Naive thymus-derived CD4-positive, alpha-beta T cell (primary cell): ENCODE measurements at regions of chr22 and their contacts with region 1.

Region 1: DNA sequence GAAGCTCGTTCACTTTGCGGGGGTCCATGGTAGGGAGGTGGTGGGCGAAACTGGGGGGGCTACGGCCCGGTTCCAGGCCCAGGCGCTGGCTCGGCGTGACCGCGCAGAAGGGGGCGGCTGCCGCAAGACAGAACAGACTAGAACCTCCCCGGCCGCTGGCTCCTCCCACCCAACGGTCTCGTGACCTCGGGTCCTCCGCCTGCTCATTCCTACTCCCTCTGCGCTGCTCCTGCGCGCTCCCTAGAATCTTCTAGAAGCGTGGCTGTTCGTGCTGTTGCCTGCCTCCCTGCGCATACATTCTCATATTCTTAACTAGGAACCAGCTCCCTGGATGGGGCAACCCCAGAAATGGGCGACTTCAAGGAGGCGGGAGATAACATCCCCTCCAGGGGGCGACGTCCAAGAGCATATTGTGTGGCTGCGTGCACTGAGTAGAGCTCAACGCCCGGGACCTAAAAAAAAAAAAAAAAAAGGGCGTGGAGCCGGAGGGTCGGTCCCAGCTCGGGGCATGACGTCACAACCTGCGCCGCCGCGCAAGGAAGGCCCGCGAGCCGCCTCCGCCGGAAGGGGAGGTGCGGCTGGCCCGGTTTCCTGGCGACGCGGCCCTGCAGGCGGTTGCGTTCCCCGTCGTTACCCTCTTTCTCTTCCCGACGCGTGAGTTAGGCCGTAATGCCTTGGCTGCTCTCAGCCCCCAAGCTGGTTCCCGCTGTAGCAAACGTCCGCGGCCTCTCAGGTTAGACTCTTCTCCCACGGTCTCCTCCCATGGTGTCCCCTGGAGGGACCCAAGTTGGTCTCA is at the starts of genes ST13 and XPNPEP3:
- DNase-seq: peak; percentile 96 to 98 (median 97)
- ATAC-seq: peak; percentile 94
- H3K4me3 ChIP-seq: peak within 1 kb of the TSS; percentile 83
- H3K4me3 Mint-ChIP-seq: peak within 1 kb of the TSS; percentile 94 to 100 (median 98)
- H3K27ac ChIP-seq: peak within 1 kb of the TSS; percentile 97
- H3K27ac Mint-ChIP-seq: peak within 1 kb of the TSS; percentile 98 to 100 (median 100)
- H3K4me1 ChIP-seq: peaks cover 24 to 39% of the 10 kb centered on the region in 2 donors
- H3K4me1 Mint-ChIP-seq: peaks cover 25 to 72% (median 64%) of the 10 kb centered on the region in 7 donors
- H3K27me3 ChIP-seq: no peaks in the 10 kb centered on the region
- H3K27me3 Mint-ChIP-seq: peaks cover 0 to 2% (median 0%) of the 10 kb centered on the region in 5 donors
- total RNA-seq, gene ST13: 126 to 247 (median 185) TPM
- total RNA-seq, gene XPNPEP3: 14.4 to 21.8 (median 19.0) TPM

Region 2: DNA sequence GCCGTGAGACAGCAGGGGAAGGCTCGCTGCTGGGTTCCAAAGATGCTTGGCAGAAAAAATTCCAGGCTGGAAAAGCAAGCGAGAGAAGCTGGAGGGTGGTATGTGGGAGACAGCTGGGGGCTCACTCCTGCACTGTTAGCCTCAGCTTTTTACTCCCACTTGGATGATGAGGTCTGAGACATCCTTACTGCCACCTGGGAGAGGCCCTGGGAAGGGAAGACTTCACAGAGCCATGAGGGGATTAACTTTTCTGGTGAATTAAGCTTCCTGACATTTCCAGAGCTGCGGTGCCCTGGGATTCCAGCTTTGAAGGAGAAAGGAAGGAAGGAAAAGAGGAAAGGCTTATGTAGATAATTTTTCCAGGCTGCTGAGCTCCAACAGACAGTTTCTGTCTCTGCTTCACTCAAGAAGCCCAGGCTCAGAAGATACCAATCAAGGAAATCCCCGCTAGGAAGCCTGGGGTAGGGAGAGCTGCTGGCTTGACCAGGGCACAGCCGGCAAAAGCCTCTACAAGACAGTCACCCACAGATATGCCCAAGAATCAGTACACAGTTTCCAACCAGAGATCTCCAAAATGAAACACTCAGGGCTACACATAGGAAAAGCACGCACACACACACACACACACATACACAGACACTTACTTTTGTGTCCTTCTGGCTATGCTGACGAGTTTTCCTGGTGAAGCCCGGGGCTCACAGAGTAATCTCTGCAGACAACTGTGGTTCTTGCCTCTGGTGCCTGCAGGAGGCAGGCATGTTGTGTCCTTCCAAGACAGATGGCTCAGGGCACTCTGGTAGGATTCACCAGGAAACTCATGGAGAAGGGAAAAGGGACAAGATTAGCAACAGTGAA is 176.5 kb before region 1 on chr22:
- CTCF ChIA-PET with region 1: interaction called, 3 read pairs
- POLR2A ChIA-PET with region 1: interaction called, 4 read pairs
- intact Hi-C with region 1: loop called (anchors 1 kb)
- DNase-seq: no peak
- ATAC-seq: no peak
- H3K4me3 ChIP-seq: no peak overlapping the region
- H3K4me3 Mint-ChIP-seq: no peak overlapping the region
- H3K27ac ChIP-seq: no peak overlapping the region
- H3K27ac Mint-ChIP-seq: peak overlapping the region in 1 of 9 donors; percentile 34
- H3K4me1 ChIP-seq: no peaks in the 10 kb centered on the region
- H3K4me1 Mint-ChIP-seq: peaks cover 4 to 31% (median 9%) of the 10 kb centered on the region in 7 donors
- H3K27me3 ChIP-seq: no peaks in the 10 kb centered on the region
- H3K27me3 Mint-ChIP-seq: peaks cover 0 to 16% (median 15%) of the 10 kb centered on the region in 5 donors

Region 3: GRCh38 chr22:40898850-40899357 is 42.2 kb after region 1 on chr22:
- CTCF ChIA-PET with region 1: interaction called, 4 read pairs
- POLR2A ChIA-PET with region 1: interaction called, 3 read pairs
- intact Hi-C with region 1: loop called (anchors 2 kb)
- DNase-seq: peak in 7 of 9 donors; percentile 12 to 52 (median 37)
- ATAC-seq: peak; percentile 67
- H3K4me3 ChIP-seq: no peak overlapping the region
- H3K4me3 Mint-ChIP-seq: peak overlapping the region in 1 of 10 donors; percentile 28
- H3K27ac ChIP-seq: no peak overlapping the region
- H3K27ac Mint-ChIP-seq: peak overlapping the region in 2 of 9 donors; percentile 36 to 44
- H3K4me1 ChIP-seq: no peaks in the 10 kb centered on the region
- H3K4me1 Mint-ChIP-seq: peaks cover 4 to 9% (median 5%) of the 10 kb centered on the region in 7 donors
- H3K27me3 ChIP-seq: no peaks in the 10 kb centered on the region
- H3K27me3 Mint-ChIP-seq: no peaks in the 10 kb centered on the region

Region 4: DNA sequence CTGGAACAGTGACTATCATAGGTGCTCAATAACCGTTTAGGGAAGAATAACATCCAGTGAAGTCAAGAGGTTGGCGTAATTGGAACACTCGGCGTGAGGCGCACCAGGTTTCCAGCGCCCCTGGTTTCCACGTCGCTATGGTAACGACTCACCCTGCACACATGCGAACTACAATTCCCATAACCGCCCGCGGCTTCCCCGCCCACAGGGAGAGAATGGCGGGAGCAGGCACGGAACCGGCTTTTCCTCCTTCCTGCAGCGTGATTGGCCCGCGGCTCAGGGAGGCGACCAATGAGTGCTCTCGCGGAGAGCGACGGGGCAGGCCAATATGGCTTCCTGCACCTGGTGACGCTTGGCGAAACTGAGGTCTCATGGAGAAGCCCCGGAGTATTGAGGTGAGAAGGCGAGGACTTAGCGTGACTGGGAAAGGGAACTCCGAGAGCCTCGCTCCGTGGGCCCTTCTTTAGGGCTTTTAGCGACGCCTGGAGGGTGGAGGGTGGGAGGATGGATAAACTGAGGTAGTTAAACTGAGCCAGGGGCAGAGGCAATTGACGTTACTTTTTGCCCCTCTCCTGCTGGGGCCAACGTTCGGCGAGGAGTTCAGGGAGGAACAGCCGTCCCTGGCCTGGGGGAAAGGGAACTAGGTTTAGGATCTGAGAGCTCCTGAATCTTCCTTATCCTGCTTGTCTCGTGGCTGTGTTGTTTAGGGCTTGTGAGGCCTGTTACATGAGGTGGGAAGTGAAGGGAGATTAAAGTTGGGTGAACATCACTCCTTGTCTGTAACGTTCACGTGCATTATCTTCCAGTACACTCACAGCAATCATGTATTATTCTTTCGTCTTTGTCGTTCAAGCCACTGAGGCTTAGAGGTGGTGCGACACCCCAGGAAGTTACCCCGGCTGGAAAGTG is 348.5 kb after region 1 on chr22 and contains the start of gene L3MBTL2:
- CTCF ChIA-PET with region 1: no interaction called
- POLR2A ChIA-PET with region 1: interaction called, 3 read pairs
- intact Hi-C with region 1: loop called in 1 of 2 experiments (anchors 1 kb)
- DNase-seq: peak; percentile 89 to 99 (median 97)
- ATAC-seq: peak; percentile 100
- H3K4me3 ChIP-seq: peak within 1 kb of the TSS; percentile 94
- H3K4me3 Mint-ChIP-seq: peak within 1 kb of the TSS; percentile 87 to 100 (median 96)
- H3K27ac ChIP-seq: peak within 1 kb of the TSS; percentile 85
- H3K27ac Mint-ChIP-seq: peak within 1 kb of the TSS; percentile 88 to 98 (median 92)
- H3K4me1 ChIP-seq: peaks cover 4 to 10% of the 10 kb centered on the region in 2 donors
- H3K4me1 Mint-ChIP-seq: peaks cover 10 to 40% (median 36%) of the 10 kb centered on the region in 7 donors
- H3K27me3 ChIP-seq: no peaks in the 10 kb centered on the region
- H3K27me3 Mint-ChIP-seq: peaks cover 0 to 26% (median 0%) of the 10 kb centered on the region in 5 donors
- total RNA-seq, gene L3MBTL2: 31.6 to 45.9 (median 43.3) TPM

Region 5: GRCh38 chr22:41468381-41469217 is 611.9 kb after region 1 on chr22 and contains the starts of genes ACO2 and PHF5A:
- CTCF ChIA-PET with region 1: no interaction called
- POLR2A ChIA-PET with region 1: interaction called, 6 read pairs
- intact Hi-C with region 1: loop called in 1 of 2 experiments (anchors 1 kb)
- DNase-seq: peak; percentile 93 to 99 (median 98)
- ATAC-seq: peak; percentile 96
- H3K4me3 ChIP-seq: peak within 1 kb of the TSS; percentile 76
- H3K4me3 Mint-ChIP-seq: peak within 1 kb of the TSS; percentile 88 to 94 (median 91)
- H3K27ac ChIP-seq: peak within 1 kb of the TSS; percentile 89
- H3K27ac Mint-ChIP-seq: peak within 1 kb of the TSS; percentile 98 to 100 (median 99)
- H3K4me1 ChIP-seq: peaks cover 19 to 20% of the 10 kb centered on the region in 2 donors
- H3K4me1 Mint-ChIP-seq: peaks cover 18 to 75% (median 59%) of the 10 kb centered on the region in 7 donors
- H3K27me3 ChIP-seq: no peaks in the 10 kb centered on the region
- H3K27me3 Mint-ChIP-seq: no peaks in the 10 kb centered on the region
- total RNA-seq, gene ACO2: 64.5 to 84.8 (median 70.3) TPM
- total RNA-seq, gene PHF5A: 27.8 to 63.9 (median 36.0) TPM